ENCODE measurements at regions of chr11 and their contacts with region 1.

Region 1: DNA sequence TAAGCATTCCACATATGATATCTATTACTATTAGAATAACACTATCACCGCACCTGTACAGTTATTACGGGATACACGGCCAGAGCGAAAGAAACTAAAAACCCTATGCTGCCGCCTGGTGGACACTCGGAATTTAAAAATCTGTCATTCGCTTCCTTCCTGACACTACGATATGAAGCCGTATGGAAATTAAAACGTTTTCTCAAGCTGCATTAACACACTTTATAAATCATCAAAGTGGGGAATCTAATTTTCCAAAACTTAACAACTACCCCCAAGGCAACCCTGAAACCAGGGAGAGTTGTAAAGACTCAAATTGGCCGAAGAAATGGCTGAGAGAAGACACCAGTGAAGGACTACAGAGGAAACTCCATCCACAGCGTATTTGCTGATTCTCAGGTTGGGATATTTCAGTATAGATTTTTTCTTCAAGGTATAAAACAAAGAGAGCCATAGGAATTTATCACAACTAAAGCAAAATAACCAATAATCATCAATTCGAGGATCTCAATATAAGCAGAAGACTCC is 1.4 kb downstream of the CCDC73 start:
- DNase-seq: peak in 1 of 2 donors; percentile 73
- ATAC-seq: peak; percentile 75

Region 2: DNA sequence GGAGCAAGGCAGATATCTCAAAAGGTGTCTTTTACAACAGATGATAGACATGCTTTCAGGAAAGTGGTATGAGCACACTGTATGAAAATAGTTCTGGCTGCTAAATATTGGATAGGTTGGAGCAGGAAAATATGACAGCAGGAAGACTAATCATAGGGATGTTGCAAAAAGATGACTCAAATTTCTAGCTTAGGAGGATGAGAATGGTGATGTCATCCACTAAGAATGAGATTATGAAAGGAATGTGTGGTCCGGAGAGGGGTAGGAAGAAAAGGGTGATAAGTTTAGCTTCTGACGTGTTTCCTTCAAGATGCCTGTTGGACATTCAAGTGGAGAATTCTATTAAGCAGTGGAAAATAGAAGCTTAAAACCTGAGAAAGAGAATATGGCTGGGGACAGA is 655.7 kb before region 1 on chr11:
- intact Hi-C with region 1: no loop called
- DNase-seq: no peak
- ATAC-seq: no peak

Region 3: GRCh38 chr11:32323814-32324130 is 469.2 kb before region 1 on chr11:
- intact Hi-C with region 1: loop called in 1 of 2 experiments (anchors 2 kb)
- DNase-seq: no peak
- ATAC-seq: no peak

Region 4: DNA sequence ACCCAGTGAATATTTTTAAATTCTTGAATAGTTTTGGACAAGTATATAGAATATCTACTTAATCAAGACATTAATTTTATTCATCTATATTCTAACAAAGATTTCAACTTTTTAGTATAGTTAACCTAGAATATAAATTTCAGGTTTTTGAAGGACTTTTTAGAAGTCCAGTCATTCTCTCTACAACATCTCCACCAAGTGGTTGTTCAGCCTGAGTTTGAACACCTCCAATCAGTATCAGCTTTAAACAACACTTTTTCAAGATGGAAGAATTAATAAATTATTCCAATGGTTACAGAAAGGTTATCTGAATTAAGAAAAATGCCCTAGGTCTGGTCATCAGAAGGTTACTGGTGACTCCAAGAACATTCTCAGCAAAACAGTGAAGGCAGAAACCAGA is 177.6 kb before region 1 on chr11:
- intact Hi-C with region 1: no loop called
- DNase-seq: no peak
- ATAC-seq: no peak

Region 5: DNA sequence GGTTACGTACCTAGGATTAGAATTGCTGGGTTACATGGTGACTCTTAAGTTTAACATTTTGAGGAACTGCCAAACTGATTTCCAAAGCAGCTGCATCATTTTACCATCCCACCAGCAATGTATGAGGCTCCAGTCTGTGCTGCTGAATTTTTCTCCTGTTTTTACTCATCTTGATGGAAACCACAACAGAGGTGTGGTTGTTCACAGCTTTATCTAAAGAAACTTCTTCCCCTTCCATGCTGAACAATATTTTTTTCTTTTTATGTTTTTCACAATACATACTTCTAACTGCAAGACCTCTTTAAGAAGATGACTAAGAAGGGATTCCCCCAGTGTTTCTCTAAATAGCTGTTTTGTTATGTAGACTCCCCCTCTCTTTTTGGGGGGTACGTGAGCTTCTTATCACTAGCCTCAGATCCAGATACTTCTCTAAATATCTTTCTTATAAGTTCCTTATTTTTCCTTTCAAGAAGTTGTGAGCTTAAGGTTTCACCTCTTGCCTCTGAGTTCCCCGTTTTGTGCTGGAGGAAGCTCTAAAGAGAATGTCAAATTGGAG is 270.4 kb after region 1 on chr11:
- intact Hi-C with region 1: no loop called
- DNase-seq: no peak
- ATAC-seq: no peak

Region 6: DNA sequence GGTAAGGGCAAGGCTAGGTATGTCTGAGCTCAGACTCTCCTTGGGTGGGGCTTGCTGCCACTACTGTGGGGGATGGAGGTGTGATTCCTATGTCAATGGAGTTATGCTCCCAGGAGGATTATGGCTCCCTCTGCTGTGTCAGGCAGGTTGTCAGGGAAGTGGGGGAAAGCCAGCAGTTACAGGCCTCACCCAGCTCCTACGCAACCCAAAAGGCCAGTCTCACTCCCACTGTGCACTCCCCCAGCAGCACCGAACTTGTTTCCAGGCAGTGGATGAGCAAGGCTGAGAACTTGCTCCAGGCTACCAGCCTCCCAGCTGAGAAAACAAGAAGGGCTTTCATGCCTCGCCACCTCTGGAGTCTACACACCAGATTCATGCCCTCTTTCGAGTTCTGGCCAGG is 889.4 kb after region 1 on chr11:
- intact Hi-C with region 1: no loop called
- DNase-seq: no peak
- ATAC-seq: peak; percentile 24